ENCODE measurements at regions of chr22 and their contacts with region 1.

Region 1: DNA sequence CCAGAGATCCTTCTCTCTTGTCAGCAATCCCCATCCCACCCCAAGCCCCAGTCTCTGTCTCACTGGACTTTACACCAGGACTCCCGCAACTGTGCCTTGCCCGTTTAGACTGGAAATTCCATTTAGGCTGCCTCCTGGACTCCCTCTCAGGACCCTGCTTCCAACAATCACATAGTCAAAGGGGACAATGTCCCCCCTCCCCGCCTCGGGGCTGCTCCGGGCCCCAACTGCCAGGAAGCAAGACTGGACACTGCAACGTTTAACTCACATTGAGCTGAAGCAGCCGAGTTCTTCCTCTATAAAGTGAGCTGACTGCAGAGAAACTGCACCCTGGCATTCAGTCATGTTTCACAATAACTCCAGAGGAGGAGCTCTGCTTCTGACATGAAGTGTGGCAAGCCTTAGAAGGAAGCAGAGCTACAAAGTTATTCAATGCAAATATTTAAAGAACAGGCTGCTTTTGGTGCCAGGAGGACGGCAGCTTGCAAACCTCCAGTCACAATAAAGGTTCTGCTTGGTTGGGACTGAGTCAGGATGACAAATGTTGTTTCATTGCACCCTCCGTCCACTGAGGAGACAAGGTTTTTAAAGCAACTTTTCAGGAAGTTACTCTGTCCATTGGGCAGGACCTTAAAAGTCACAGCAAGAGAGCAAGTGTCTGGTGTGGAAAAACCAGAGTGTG is 19.9 kb downstream of the PACSIN2 start:
- DNase-seq: peak; percentile 71 to 95
- ATAC-seq: peak; percentile 82 to 84
- H3K4me3 ChIP-seq: peak overlapping the region; percentile 52
- H3K27ac ChIP-seq: peak overlapping the region; percentile 95 to 99
- H3K4me1 ChIP-seq: peaks cover 90% of the 10 kb centered on the region
- CTCF ChIP-seq: no peak
- EP300 ChIP-seq: peak; percentile 49 to 61; a peak in 2 of 5 replicates
- POLR2A ChIP-seq: peak; percentile 37
- RAD21 ChIP-seq: peak; percentile 3 to 26; a peak in 2 of 5 replicates

Region 2: GRCh38 chr22:43014869-43015676 is 20.1 kb after region 1 on chr22 and contains the start of gene PACSIN2:
- CTCF ChIA-PET with region 1: interaction called, 11 read pairs
- POLR2A ChIA-PET with region 1: interaction called, 25 read pairs
- DNase-seq: peak; percentile 93 to 96
- ATAC-seq: peak; percentile 96 to 98
- H3K4me3 ChIP-seq: peak within 1 kb of the TSS; percentile 92
- H3K27ac ChIP-seq: peak within 1 kb of the TSS; percentile 90 to 93
- H3K4me1 ChIP-seq: peaks cover 45% of the 10 kb centered on the region
- CTCF ChIP-seq: no peak
- EP300 ChIP-seq: no peak
- POLR2A ChIP-seq: peak; percentile 88
- RAD21 ChIP-seq: no peak
- polyA plus RNA-seq, gene PACSIN2: 76.5 and 94.0 TPM in 2 replicates

Region 3: DNA sequence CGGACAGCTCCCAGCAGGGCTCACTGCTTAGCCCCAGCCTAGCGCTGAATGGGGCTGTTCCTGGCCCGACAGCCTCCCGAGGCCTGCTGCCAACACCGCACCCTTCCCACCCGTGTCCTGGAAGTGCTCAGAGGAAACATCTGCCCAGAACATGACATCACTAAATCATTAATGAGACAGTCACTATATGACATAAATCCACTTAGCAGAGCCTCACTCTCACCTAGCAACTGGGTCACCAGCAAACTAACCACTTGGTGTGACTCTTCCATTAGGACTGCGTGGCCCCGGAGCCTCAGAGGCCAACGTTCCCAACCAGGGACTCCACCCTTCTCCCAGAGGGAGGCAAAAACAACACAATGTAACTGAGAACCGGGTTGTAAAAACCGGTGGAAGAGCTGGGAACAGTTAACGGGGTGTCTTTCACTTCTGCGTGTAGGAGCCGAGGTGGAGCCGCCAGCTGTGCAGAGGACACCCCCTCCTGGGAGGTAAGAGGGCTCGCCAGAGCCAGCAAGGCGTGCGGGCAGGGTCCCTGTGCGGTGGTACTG is 41.3 kb after region 1 on chr22:
- CTCF ChIA-PET with region 1: interaction called, 31 read pairs
- POLR2A ChIA-PET with region 1: no interaction called
- DNase-seq: no peak
- ATAC-seq: no peak
- H3K4me3 ChIP-seq: no peak overlapping the region
- H3K27ac ChIP-seq: no peak overlapping the region; a peak in 1 of 6 replicates
- H3K4me1 ChIP-seq: peaks cover 10% of the 10 kb centered on the region
- CTCF ChIP-seq: no peak
- EP300 ChIP-seq: no peak
- POLR2A ChIP-seq: no peak
- RAD21 ChIP-seq: no peak

Region 4: GRCh38 chr22:43090130-43090789 is 95.2 kb after region 1 on chr22:
- CTCF ChIA-PET with region 1: interaction called, 13 read pairs
- POLR2A ChIA-PET with region 1: interaction called, 3 read pairs
- DNase-seq: peak; percentile 82 to 93
- ATAC-seq: peak; percentile 74 to 75
- H3K4me3 ChIP-seq: no peak overlapping the region; the same call in 2 of the 3 replicates
- H3K27ac ChIP-seq: peak overlapping the region; percentile 64 to 92; a peak in 4 of 6 replicates
- H3K4me1 ChIP-seq: peaks cover 12% of the 10 kb centered on the region
- CTCF ChIP-seq: peak; percentile 71
- EP300 ChIP-seq: no peak
- POLR2A ChIP-seq: no peak
- RAD21 ChIP-seq: peak; percentile 83 to 88

Measured in A549 (cell line).